Cardiac septum (tissue), 1 donor: ENCODE measurements at regions of chr15 and their contacts with region 1.

Region 1: DNA sequence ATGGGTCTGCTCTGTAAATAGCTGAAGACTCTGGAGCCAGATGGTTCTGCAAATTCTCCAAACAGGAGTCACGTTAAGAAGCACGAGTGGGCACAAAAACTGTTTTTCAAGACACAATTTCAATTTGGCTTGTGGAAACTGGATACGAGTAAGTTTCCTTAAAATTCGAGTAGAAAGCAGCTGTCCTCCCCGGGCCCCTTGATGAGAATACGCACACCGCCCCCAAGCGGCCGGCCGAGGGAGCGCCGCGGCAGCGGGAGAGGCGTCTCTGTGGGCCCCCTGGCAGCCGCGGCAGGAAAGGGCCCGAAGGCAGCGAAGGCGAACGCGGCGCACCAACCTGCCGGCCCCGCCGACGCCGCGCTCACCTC is 778 bp upstream of the THBS1 start:
- DNase-seq: peak; percentile 96

Region 2: GRCh38 chr15:38817427-38818156 is 762.5 kb before region 1 on chr15:
- intact Hi-C with region 1: loop called (anchors 2 kb)
- DNase-seq: peak; percentile 88

Region 3: DNA sequence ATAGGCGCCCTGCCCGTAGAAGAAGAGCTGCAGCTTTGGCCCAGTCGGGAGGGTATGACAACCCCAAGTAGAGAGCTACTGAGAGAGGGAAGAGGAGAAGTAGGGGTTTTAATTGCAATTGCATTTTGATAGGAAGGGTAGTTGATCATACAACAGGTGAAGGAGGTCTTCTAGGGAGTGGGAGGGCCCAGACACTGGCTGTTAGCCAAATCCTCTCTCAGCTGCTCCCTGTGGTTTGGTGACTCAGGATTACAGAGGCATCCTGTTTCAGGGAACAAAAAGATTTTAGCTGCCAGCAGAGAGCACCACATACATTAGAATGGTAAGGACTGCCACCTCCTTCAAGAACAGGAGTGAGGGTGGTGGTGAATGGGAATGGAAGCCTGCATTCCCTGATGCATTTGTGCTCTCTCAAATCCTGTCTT is 408.1 kb before region 1 on chr15:
- intact Hi-C with region 1: loop called (anchors 1 kb)
- DNase-seq: no peak

Region 4: GRCh38 chr15:39358441-39359041 is 221.6 kb before region 1 on chr15:
- intact Hi-C with region 1: loop called (anchors 5 kb)
- DNase-seq: no peak

Region 5: GRCh38 chr15:39369768-39370167 is 210.3 kb before region 1 on chr15:
- intact Hi-C with region 1: no loop called
- DNase-seq: peak; percentile 69

Region 6: GRCh38 chr15:39491886-39492490 is 88.1 kb before region 1 on chr15:
- intact Hi-C with region 1: loop called (anchors 5 kb)
- DNase-seq: no peak

Region 7: DNA sequence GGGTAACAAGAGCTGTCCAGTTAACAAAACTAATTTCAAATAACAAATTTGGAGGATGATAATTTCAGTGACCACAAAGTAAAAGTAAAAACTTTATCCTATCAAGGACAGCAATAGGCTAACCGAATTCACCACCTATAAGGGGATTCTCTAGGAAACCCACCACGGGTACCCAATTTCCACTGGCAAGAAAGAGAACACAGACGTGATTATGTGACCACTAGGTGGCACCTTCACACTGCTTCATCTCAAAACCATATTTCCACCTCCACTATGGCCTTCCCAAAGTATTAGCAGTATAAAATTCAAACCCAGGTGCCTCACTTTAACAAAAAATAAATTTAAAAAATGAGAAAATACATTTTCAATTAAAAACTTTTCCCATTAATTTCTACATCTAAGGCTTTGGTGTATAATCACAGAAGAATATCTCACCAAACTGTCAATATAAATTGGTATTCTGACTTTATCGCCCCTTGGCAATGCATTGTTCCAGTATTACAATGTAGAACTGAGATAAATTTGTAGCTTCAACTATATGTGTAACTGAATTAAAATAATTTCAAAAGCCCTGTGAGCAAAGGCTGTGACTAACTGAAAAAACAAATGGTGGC is 106.0 kb after region 1 on chr15:
- intact Hi-C with region 1: no loop called
- DNase-seq: no peak